GM13977 (cell line): ENCODE measurements at regions of chr12 and their contacts with region 1.

Region 1: DNA sequence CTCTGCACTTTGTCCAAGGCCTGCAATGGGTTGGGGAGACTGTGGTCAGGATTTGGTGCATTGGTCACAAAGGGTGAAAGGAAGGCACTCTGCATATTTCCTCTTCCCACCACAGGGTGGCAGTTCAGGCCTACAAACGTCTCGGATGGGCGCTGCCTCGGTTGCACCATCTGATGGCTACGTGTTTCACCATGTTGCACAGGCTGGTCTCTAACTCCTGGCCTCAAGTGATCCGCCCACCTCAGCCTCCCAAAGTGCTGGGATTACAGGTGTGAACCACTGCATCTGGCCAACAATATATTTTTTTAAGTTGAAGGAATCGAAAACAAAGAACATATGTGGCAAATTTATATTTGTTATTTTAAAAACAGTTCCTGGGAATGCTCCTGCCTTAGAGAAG is 35.1 kb downstream of the TMBIM6 start:
- DNase-seq: peak; percentile 79
- CTCF ChIP-seq: peak; percentile 83

Region 2: DNA sequence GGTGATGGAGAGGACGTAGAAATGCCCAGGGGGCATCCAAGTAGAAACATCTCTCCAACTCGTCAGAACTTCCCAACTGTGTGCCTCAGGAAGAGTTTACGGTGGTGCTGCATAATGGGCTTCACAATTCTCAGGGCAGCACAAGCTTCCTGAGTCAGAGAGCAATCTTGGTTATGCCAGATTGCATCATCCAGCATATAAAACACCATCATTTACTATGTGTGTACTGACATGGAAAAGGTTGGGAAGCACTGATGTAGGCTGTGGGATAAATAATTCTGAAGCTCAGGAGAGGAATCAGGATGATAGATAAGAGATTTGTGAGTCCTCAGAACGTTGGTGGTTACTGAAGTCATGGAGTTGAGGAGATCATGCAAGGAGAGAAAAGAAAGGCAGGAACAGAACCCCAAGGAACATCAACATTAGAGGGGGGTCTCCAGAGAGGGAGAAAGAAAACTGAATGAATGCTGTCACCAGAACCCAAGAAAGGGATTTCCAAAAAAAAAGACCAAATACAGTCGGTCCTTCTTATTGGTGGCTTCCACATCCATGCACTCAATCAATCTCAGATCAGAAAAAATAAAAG is 56.5 kb after region 1 on chr12:
- in situ Hi-C with region 1: loop called (anchors 5 kb)
- DNase-seq: no peak
- CTCF ChIP-seq: no peak

Region 3: GRCh38 chr12:50074936-50075807 is 298.8 kb after region 1 on chr12:
- in situ Hi-C with region 1: no loop called
- DNase-seq: peak; percentile 88
- CTCF ChIP-seq: peak; percentile 91